ENCODE measurements at regions of chr11 and their contacts with region 1.

Region 1: GRCh38 chr11:112289588-112290492 is 29.2 kb upstream of the PLET1 start:
- DNase-seq: peak; percentile 52
- H3K4me3 ChIP-seq: peak overlapping the region; percentile 26 to 70 (median 59)
- H3K27ac ChIP-seq: no peak overlapping the region
- H3K4me1 ChIP-seq: peaks cover 29% of the 10 kb centered on the region
- H3K27me3 ChIP-seq: no peaks in the 10 kb centered on the region
- CTCF ChIP-seq: peak; percentile 77 to 82
- POLR2A ChIP-seq: no peak

Region 2: DNA sequence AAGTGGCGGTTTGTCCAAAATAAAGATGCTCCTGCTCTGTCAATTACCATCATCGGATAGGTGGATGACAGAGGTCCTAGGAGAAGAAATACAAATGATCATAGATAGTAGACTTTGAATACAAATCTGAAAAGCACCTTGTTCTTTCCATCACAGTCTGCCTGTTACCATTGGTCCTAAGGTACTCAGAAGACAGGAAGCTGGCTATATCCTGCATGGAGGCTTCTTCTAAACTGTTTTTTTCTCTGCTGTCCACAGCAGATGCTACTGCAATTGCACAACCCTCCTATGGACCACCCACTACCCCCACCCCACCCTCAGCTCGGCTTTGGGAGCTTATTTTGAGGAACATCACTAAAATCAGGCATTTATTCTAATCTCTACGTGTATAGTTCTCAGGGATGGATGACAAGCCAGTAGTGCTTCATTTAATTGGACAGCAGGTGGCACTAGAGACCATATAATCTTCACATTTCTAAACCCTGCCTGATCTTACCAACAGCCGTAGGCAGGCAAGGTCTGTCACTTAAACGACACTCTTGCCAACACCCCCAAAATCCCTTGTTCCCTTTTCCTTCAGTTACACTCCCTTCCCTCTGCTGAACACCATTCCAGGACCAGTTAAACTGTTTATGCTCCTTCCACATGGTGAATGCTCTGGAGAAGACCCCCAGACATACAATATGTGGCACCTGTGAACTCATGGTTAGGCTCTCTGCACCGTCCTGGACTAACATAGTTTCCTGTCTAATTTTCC is 70.2 kb before region 1 on chr11:
- CTCF ChIA-PET with region 1: interaction called, 540 read pairs
- POLR2A ChIA-PET with region 1: no interaction called
- dilution Hi-C with region 1: no loop called
- intact Hi-C with region 1: no loop called
- DNase-seq: peak; percentile 80
- H3K4me3 ChIP-seq: no peak overlapping the region
- H3K27ac ChIP-seq: no peak overlapping the region
- H3K4me1 ChIP-seq: peaks cover 11% of the 10 kb centered on the region
- H3K27me3 ChIP-seq: no peaks in the 10 kb centered on the region
- CTCF ChIP-seq: peak; percentile 57 to 60
- POLR2A ChIP-seq: no peak

Region 3: GRCh38 chr11:112453601-112454577 is 164.0 kb after region 1 on chr11:
- CTCF ChIA-PET with region 1: interaction called, 9 read pairs
- POLR2A ChIA-PET with region 1: no interaction called
- dilution Hi-C with region 1: no loop called
- intact Hi-C with region 1: loop called (anchors 1 kb)
- DNase-seq: peak; percentile 24
- H3K4me3 ChIP-seq: no peak overlapping the region
- H3K27ac ChIP-seq: no peak overlapping the region
- H3K4me1 ChIP-seq: no peaks in the 10 kb centered on the region
- H3K27me3 ChIP-seq: no peaks in the 10 kb centered on the region
- CTCF ChIP-seq: peak; percentile 26 to 43
- POLR2A ChIP-seq: no peak

Region 4: GRCh38 chr11:112613051-112613972 is 323.5 kb after region 1 on chr11:
- CTCF ChIA-PET with region 1: no interaction called
- POLR2A ChIA-PET with region 1: no interaction called
- dilution Hi-C with region 1: no loop called
- intact Hi-C with region 1: loop called (anchors 5 kb)
- DNase-seq: peak; percentile 58
- H3K4me3 ChIP-seq: no peak overlapping the region
- H3K27ac ChIP-seq: peak overlapping the region; percentile 10
- H3K4me1 ChIP-seq: peaks cover 29% of the 10 kb centered on the region
- H3K27me3 ChIP-seq: no peaks in the 10 kb centered on the region
- CTCF ChIP-seq: no peak
- POLR2A ChIP-seq: no peak

Region 5: DNA sequence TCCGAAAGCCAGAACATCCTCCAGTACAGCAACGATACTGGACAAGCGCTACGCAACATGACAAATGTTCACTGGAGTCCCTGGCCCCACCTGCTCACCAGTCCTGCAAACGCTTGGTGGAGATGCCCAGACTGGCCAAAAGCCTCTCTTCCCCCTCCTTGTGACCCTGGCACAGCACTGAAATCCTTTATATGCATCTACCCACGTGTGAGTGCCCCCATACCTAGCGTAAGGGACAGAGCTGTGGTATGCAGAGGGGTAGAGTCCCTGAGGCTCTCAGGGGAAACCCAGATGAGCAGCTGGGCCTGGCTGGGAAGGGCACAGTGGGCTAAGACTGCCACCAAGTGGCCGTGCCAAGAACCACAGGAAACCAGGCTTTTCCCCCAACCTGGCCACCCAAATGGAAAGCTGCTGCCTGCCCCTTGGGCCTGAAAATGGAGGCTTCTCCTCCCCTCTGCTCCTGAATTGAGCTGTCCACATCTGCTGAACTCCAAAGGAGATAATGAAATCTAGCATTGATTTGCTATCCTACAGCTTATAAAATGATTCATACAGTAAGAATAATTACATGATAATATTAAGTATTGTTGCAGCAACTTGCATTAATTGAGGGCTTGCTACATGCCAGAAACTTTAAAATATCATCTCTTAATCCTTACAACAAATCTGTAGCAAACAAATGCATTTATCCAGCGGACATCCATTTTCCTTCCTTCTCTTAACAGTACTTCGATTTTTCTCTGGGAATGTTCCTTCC is 999.8 kb after region 1 on chr11:
- CTCF ChIA-PET with region 1: interaction called, 54 read pairs
- POLR2A ChIA-PET with region 1: no interaction called
- dilution Hi-C with region 1: no loop called
- intact Hi-C with region 1: loop called (anchors 1 kb)
- DNase-seq: peak; percentile 59
- H3K4me3 ChIP-seq: no peak overlapping the region
- H3K27ac ChIP-seq: no peak overlapping the region
- H3K4me1 ChIP-seq: no peaks in the 10 kb centered on the region
- H3K27me3 ChIP-seq: no peaks in the 10 kb centered on the region
- CTCF ChIP-seq: peak; percentile 76 to 92
- POLR2A ChIP-seq: no peak

Measured in endothelial cell of umbilical vein (primary cell).